Sciatic nerve (tissue), 2 donors: ENCODE measurements at regions of chr6 and their contacts with region 1.

Region 1: DNA sequence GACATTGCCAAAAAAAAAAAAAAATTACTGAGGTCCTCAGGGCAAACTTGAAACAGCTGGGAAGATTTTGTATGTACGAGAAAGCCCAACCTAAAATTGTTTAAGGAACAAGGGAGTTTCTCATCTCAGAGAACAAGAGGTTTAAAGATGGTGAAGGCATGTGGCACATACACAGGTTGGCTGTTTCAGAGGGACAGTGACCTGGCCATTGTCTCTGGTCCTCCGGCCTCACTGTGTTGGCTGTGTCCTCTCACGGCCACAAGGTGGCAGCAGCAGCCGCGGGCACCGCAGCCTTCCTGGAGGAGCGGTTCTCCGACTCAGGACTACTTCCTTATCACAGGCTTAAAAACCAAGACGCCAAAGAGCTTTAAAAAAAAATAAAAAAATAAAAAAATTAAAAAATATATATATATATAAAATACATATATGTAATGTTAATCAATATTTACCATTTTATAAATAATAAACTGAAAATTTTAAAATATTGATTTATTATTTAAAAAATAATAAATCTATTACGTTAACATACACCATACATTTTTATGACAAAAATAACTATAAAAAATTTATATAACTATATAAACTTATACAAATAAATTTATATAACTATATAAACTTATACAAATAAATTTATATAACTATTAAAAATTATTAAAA is 52.8 kb downstream of the GTF2H5 start:
- DNase-seq: peak; percentile 88
- ATAC-seq: peak; percentile 97

Region 2: GRCh38 chr6:156839591-156840001 is 1381.3 kb before region 1 on chr6:
- intact Hi-C with region 1: no loop called
- DNase-seq: no peak
- ATAC-seq: peak; percentile 86

Region 3: DNA sequence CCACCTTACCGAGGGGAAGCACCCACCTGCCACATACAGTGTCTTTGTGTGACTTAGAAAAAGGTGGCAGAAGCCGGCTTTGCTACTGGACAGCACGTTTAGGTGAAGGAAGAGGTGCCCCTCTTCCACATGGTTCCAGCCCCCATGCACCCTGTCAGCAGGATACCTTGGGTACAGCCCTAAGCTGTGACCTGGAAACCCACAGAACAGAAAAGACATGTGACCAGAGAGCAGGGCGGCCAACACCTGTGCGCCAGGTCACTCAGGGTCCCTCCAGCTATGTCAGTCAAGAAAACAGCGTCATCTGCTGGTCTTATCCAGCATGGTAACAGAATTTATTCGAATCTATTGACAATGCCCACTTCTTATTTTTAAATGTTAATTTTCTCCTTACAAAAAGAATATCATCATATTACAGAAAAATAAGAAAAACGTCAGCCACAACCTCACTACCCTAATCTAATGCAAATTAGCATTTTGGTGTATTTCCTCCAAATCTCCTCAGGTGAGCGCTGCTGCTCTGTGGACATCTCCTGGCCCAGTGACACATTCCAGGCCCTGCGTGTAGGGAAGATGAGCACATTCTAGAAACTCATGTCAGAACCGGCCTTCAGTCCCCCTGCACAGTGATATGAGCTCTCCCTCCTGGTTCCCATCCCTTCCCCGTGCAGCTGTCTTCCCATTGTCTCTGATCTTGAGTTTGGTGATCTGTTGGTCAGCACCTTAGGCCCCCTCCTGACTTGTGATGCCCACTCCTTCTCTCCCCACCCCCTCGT is 15.6 kb before region 1 on chr6:
- intact Hi-C with region 1: no loop called
- DNase-seq: no peak
- ATAC-seq: no peak

Region 4: DNA sequence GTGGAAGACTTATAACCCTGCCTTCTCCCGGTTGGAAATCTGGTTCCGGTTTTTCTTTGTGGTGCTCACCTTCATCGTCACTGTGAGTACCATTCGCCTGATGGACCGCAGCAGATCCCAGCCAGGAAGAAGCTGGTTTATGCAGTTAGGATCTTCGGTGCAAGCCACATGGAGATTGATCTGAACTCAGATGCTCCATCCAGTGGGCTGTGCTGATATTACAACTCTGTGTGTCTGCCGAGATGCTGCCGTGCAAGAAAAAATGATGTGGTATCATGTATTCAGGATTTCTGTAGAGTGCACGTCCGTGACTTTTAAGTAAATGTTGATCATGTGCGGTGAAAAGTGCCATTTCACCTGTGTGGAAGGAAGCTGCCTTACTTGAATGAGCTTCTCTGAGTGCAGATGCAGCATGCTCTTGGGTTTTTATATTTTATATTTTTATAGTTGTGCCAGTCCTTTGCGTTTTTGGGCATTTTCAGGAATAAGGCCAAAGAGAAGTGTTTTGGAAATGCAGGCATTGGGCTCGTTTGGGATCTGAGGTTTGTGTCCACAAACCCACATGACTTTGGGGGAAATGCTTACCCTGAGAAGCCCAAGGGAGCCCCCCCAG is 384.5 kb after region 1 on chr6:
- intact Hi-C with region 1: loop called (anchors 10 kb)
- DNase-seq: peak; percentile 73
- ATAC-seq: peak; percentile 74

Region 5: DNA sequence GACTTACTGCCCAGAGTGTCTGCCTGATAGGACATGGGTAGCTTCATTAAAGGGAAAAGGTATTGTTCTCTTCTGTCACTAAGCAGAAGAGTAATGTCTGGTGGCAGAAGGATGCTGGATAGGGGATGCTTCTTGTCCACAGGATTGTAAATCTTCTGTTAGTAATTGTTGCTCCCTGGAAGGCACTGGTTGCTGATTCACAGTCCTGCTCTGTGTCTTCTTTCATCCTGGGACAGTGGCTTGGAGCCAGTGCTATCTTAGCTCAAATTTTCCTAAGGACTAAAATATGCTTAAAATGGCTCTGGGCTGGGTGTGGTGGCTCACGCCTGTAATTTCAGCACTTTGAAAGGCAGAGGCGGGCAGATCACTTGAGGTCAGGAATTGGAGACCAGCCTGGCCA is 476.9 kb after region 1 on chr6:
- intact Hi-C with region 1: loop called (anchors 5 kb)
- DNase-seq: no peak
- ATAC-seq: no peak

Region 6: DNA sequence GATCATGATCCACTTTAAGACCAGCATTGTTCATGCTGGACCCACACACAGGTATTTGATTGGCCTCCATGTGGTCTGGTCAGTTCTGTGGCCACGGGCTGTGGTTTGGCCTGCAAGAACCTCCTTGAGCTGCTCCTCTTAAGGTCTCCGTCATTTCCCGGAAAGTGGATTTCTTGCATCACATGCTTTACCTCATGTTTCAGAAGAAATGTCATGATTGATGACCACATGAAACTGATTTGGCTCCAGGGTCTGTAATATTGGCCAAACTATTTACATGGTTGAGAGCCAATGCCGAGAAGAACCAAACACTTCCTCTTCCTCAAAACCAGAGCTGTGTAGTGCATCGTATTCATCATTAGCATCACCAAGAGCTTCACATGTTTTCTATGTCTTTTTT is 792.3 kb after region 1 on chr6:
- intact Hi-C with region 1: no loop called
- DNase-seq: no peak
- ATAC-seq: no peak